K562 (cell line): ENCODE measurements at regions of chr12 and their contacts with region 1.

Region 1: DNA sequence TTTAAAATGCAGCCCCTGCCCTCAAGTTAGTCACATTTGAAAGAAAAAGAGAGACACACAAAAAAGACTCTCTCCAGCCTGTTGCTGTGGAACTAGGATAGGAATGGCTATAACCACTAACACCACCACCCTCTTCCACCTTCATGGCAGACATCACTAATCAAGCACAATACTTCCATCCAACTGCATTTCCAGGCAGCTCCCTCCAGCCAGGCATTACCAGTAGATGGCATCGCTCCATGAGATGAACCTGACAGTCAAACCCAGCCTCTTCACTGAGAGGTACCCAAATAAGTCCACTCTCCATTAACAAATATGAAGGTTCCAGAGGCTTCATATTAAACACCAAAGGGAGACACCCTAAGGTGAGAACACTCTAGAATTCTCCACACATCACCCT is 24.4 kb downstream of the SLC8B1 start:
- DNase-seq: peak in 1 of 4 experiments; percentile 38
- ATAC-seq: peak; percentile 20; the same call in 2 of the 3 replicates
- H3K4me3 ChIP-seq: no peak overlapping the region
- H3K27ac ChIP-seq: no peak overlapping the region
- H3K4me1 ChIP-seq: peaks cover 10 to 11% of the 10 kb centered on the region in 2 experiments
- H3K27me3 ChIP-seq: no peaks in the 10 kb centered on the region
- CTCF ChIP-seq: no peak
- EP300 ChIP-seq: no peak
- POLR2A ChIP-seq: no peak
- RAD21 ChIP-seq: peak in 1 of 2 experiments; percentile 13; a peak in 1 of 4 replicates

Region 2: GRCh38 chr12:113292091-113292490 is 18.4 kb before region 1 on chr12:
- CTCF ChIA-PET with region 1: no interaction called
- POLR2A ChIA-PET with region 1: no interaction called
- in situ Hi-C with region 1: no loop called
- intact Hi-C with region 1: no loop called
- DNase-seq: no peak
- ATAC-seq: no peak
- H3K4me3 ChIP-seq: no peak overlapping the region
- H3K27ac ChIP-seq: no peak overlapping the region
- H3K4me1 ChIP-seq: peaks cover 0 to 6% of the 10 kb centered on the region in 2 experiments; a peak in 1 of 5 replicates
- H3K27me3 ChIP-seq: no peaks in the 10 kb centered on the region
- CTCF ChIP-seq: no peak
- EP300 ChIP-seq: no peak
- POLR2A ChIP-seq: no peak
- RAD21 ChIP-seq: no peak

Region 3: DNA sequence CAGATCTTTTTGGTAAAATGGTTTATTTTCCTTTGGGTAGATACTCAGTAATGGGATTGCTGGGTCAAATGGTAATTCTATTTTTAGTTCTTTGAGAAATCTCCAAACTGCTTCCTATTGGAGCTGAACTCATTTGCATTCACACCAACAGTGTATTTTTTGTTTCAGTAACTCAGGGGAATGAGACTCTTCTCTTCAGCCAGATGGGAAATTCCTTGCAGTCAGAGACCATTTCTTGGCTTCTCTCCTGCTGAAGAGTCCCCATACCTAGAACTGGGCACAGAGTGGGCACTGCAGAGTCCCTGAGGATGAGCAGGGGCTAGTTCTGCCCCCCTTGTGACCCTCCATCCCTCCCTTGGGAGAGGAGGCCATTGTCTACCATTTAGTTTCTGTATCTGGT is 122.5 kb after region 1 on chr12:
- CTCF ChIA-PET with region 1: no interaction called
- POLR2A ChIA-PET with region 1: no interaction called
- in situ Hi-C with region 1: loop called (anchors 5 kb)
- intact Hi-C with region 1: no loop called
- DNase-seq: no peak
- ATAC-seq: no peak
- H3K4me3 ChIP-seq: no peak overlapping the region
- H3K27ac ChIP-seq: no peak overlapping the region
- H3K4me1 ChIP-seq: no peaks in the 10 kb centered on the region
- H3K27me3 ChIP-seq: peaks cover 0 to 11% of the 10 kb centered on the region in 2 experiments; a peak in 2 of 5 replicates
- CTCF ChIP-seq: no peak
- EP300 ChIP-seq: no peak
- POLR2A ChIP-seq: no peak
- RAD21 ChIP-seq: no peak